Right ventricle myocardium inferior (tissue), 1 donor: ENCODE measurements at regions of chr15 and their contacts with region 1.

Region 1: GRCh38 chr15:64013179-64014043 is 32.9 kb downstream of the DAPK2 start:
- DNase-seq: no peak
- ATAC-seq: no peak

Region 2: GRCh38 chr15:63915873-63916771 is 97.3 kb before region 1 on chr15:
- intact Hi-C with region 1: no loop called
- DNase-seq: no peak
- ATAC-seq: no peak

Region 3: GRCh38 chr15:63985221-63986184 is 27.9 kb before region 1 on chr15:
- intact Hi-C with region 1: loop called (anchors 2 kb)
- DNase-seq: peak; percentile 93
- ATAC-seq: peak; percentile 90

Region 4: DNA sequence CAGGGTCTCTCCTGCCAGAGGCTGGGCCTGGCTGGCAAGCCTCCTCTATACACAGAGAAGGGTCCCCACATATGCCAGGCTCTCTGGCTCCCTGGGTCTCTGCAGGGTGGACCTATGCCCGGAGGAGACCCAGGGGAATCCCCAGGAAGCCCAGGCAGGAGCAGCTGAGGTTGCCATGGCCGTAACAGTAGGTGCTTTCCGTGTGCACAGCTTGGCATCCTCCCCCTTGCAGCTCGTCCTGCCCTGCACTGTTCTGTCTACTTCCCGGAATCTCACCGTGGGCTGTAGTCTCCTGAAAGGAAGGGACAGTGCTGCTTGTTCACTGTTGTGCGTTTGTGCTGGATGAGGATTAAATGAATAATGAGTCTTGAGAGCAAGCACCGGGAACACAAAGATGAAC is 14.9 kb before region 1 on chr15:
- intact Hi-C with region 1: no loop called
- DNase-seq: no peak
- ATAC-seq: peak; percentile 30

Region 5: GRCh38 chr15:64112904-64113303 is 99.5 kb after region 1 on chr15:
- intact Hi-C with region 1: no loop called
- DNase-seq: no peak
- ATAC-seq: no peak